ENCODE measurements at regions of chr3 and their contacts with region 1.

Region 1: GRCh38 chr3:157201648-157202278 is 41.8 kb upstream of the CCNL1 start:
- DNase-seq: no peak
- H3K4me3 Mint-ChIP-seq: no peak overlapping the region
- H3K27ac Mint-ChIP-seq: no peak overlapping the region
- H3K4me1 Mint-ChIP-seq: no peaks in the 10 kb centered on the region
- H3K27me3 Mint-ChIP-seq: no peaks in the 10 kb centered on the region

Region 2: GRCh38 chr3:157220211-157220610 is 18.4 kb after region 1 on chr3:
- CTCF ChIA-PET with region 1: interaction called, 10 read pairs
- DNase-seq: no peak
- H3K4me3 Mint-ChIP-seq: no peak overlapping the region
- H3K27ac Mint-ChIP-seq: no peak overlapping the region
- H3K4me1 Mint-ChIP-seq: no peaks in the 10 kb centered on the region
- H3K27me3 Mint-ChIP-seq: peaks cover 4% of the 10 kb centered on the region

Region 3: DNA sequence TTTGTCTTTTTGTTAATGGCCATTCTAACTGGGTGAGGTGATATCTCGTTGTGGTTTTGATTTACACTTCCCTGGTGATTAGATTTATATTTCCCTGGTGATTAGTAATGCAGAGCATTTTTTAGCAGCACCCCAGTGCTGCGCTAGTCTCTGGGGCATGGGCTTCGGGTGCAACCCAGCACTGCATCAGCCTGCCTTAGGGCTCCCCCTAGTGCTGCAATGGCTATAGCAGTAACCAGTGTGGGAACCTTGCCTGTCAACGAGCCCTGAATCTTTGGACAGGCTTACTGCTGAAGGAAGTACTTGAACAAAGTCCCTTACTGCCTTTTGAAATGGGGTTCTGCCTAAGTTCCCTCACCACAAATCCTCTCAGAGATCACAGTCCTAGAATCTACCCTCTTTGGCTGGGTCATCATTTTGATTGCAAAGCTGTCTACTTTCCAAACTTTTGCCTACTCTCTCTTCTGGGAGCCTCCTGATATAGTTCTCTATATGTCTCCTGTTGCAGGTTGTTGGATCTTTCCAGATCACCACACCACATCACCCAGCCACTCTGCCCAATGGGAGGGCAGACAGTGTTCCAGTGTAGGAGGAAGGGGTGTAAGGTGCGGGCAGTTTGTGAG is 37.4 kb after region 1 on chr3:
- CTCF ChIA-PET with region 1: interaction called, 14 read pairs
- DNase-seq: peak; percentile 85
- H3K4me3 Mint-ChIP-seq: no peak overlapping the region
- H3K27ac Mint-ChIP-seq: no peak overlapping the region
- H3K4me1 Mint-ChIP-seq: no peaks in the 10 kb centered on the region
- H3K27me3 Mint-ChIP-seq: no peaks in the 10 kb centered on the region

Region 4: GRCh38 chr3:157618075-157618760 is 416.5 kb after region 1 on chr3:
- CTCF ChIA-PET with region 1: no interaction called
- DNase-seq: no peak
- H3K4me3 Mint-ChIP-seq: no peak overlapping the region
- H3K27ac Mint-ChIP-seq: no peak overlapping the region
- H3K4me1 Mint-ChIP-seq: no peaks in the 10 kb centered on the region
- H3K27me3 Mint-ChIP-seq: no peaks in the 10 kb centered on the region